ENCODE measurements at regions of chr2 and their contacts with region 1.

Region 1: GRCh38 chr2:112645310-112646101 is at the start of gene SLC20A1:
- DNase-seq: peak; percentile 100
- H3K4me3 Mint-ChIP-seq: peak within 1 kb of the TSS; percentile 100
- H3K27ac Mint-ChIP-seq: peak within 1 kb of the TSS; percentile 90
- H3K4me1 Mint-ChIP-seq: peaks cover 67% of the 10 kb centered on the region
- H3K27me3 Mint-ChIP-seq: no peaks in the 10 kb centered on the region
- total RNA-seq, gene SLC20A1: 180 and 182 TPM in 2 replicates

Region 2: GRCh38 chr2:112481050-112481527 is 164.4 kb before region 1 on chr2:
- intact Hi-C with region 1: loop called (anchors 5 kb)
- DNase-seq: peak; percentile 96
- H3K4me3 Mint-ChIP-seq: peak overlapping the region; percentile 94
- H3K27ac Mint-ChIP-seq: peak overlapping the region; percentile 97
- H3K4me1 Mint-ChIP-seq: peaks cover 34% of the 10 kb centered on the region
- H3K27me3 Mint-ChIP-seq: peaks cover 2% of the 10 kb centered on the region

Region 3: GRCh38 chr2:112601751-112602150 is 43.8 kb before region 1 on chr2:
- intact Hi-C with region 1: loop called (anchors 1 kb)
- DNase-seq: no peak
- H3K4me3 Mint-ChIP-seq: no peak overlapping the region
- H3K27ac Mint-ChIP-seq: no peak overlapping the region
- H3K4me1 Mint-ChIP-seq: peaks cover 5% of the 10 kb centered on the region
- H3K27me3 Mint-ChIP-seq: no peaks in the 10 kb centered on the region

Region 4: GRCh38 chr2:112666764-112667122 is 21.2 kb after region 1 on chr2:
- intact Hi-C with region 1: loop called (anchors 2 kb)
- DNase-seq: no peak
- H3K4me3 Mint-ChIP-seq: no peak overlapping the region
- H3K27ac Mint-ChIP-seq: peak overlapping the region; percentile 60
- H3K4me1 Mint-ChIP-seq: peaks cover 2% of the 10 kb centered on the region
- H3K27me3 Mint-ChIP-seq: no peaks in the 10 kb centered on the region

Region 5: GRCh38 chr2:112706170-112706664 is 60.7 kb after region 1 on chr2:
- intact Hi-C with region 1: loop called (anchors 1 kb)
- DNase-seq: peak; percentile 94
- H3K4me3 Mint-ChIP-seq: peak overlapping the region; percentile 74
- H3K27ac Mint-ChIP-seq: peak overlapping the region; percentile 69
- H3K4me1 Mint-ChIP-seq: peaks cover 45% of the 10 kb centered on the region
- H3K27me3 Mint-ChIP-seq: no peaks in the 10 kb centered on the region

Region 6: GRCh38 chr2:112764071-112765044 is 118.9 kb after region 1 on chr2 and contains the start of gene CKAP2L:
- intact Hi-C with region 1: loop called (anchors 1 kb)
- DNase-seq: peak; percentile 99
- H3K4me3 Mint-ChIP-seq: peak within 1 kb of the TSS; percentile 92
- H3K27ac Mint-ChIP-seq: peak within 1 kb of the TSS; percentile 93
- H3K4me1 Mint-ChIP-seq: peaks cover 47% of the 10 kb centered on the region
- H3K27me3 Mint-ChIP-seq: no peaks in the 10 kb centered on the region
- total RNA-seq, gene CKAP2L: 17.8 and 17.9 TPM in 2 replicates

Measured in activated CD4-positive, alpha-beta T cell treated with anti-CD3 and anti-CD28 coated beads, Interleukin-2, amount 10 ng/mL, durations not matched to agents 24 days and 14 days (primary cell).